Left ventricle myocardium superior (tissue), 1 donor: ENCODE measurements at regions of chr5 and their contacts with region 1.

Region 1: DNA sequence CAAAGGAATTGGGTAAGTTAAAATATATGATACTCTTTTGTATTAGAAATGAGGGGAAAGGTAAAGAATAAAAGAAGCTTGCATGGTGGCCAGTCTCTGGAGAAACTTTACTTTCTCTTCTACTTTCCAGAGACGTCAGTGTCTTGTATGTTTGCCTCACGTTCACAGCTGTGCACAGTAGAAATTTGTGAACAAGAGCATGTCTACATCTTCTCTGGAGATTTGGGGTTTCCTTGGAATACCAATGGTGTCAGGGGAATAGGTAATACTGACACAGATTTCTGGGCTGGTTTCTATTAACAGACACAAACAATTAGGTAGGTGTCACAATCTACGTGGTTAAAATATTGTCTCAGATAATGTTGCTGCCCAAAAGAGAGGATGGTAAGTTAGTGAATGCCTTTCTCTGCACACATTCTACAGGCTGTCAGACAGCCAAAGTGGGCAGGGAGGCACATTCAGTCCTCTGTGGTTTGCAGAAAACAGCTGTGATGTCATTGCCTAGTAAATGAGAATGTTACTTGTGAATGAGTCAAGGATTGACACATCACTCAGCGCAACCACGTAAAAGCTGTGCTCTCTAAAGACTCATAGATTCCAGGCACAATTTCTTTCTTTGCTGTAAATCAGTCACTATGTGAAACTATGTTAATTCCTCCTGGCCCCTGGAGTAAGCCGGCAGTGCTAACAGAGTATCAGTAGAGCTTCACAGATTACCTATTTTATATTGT is 397.1 kb downstream of the MAN2A1 start:
- DNase-seq: no peak
- ATAC-seq: peak; percentile 76

Region 2: DNA sequence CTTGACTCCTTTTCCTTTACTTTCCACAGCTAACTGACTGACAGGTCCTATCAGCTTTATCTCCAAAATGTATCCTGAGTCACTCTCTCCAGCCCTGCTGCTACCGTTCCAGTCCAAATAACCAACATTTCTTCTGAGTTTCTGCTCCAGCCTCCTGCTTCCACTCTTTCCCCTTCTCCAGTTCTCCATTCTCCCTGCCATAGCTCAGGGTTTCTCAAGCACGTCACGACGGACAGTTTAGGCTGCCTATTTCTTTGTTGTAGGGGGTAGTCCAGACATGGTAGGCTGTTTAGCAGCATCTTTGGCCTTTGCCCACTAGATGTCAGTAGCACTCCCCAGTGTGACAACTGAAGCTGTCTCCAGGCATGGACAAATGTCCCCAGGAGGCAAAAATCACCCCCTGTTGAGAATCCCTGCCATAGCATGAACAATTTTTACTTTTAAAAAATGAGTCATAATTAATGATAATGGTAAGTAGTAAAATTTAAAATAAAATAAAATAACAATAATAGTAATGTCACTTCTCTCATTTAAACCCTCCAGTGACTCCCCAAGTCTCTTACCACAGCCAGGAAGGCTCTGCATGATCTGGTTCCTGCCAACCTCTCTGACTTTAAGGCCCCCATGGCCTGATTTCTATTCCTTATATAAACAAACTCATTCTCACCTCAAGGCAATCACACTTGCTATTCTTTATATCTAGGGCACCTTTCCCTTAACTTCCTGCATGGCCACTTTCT is 1444.5 kb before region 1 on chr5:
- intact Hi-C with region 1: loop called (anchors 5 kb)
- DNase-seq: no peak
- ATAC-seq: peak; percentile 97